ENCODE measurements at regions of chr2 and their contacts with region 1.

Region 1: DNA sequence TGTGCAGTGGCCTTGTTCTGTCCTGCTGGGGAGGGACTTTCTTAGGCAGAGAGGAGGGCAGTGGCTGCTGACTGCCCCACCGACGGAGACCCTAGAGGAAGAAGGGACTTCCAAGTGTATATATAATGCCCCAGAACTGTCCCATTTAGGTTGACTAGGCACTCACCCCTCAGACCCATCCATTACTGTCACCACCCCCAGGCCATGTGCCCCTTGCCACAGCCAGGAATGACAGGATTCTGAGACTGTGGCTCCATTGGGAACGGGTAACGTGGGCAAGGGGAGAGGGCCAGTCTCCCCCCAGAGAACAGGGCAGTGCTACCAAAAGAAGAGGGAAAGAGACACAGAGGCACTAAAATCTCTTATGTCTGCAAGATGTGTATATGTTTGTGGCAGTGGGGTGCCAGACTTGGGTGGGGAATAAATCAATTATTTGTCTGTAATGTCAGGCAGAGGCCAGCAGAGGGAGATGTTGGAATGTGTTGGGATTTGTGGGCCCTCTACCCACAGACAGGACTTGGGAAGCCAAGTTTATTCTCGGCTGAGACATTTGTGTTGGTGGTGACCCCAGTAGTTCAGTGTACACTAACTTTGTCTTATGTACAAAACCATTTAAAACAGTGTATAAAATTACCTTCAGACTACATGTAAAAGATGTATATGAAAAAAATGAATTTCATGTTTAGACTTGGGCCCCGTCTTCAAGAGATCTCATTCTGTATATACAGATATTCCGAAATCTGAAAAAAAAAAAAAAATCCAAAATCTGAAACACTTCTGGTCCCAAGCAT is 24.0 kb upstream of the TMEM37 start:
- DNase-seq: peak in 6 of 9 donors; percentile 5 to 50 (median 30)
- ATAC-seq: peak; percentile 57
- H3K4me3 ChIP-seq: no peak overlapping the region
- H3K4me3 Mint-ChIP-seq: no peak overlapping the region
- H3K27ac ChIP-seq: no peak overlapping the region
- H3K27ac Mint-ChIP-seq: no peak overlapping the region
- H3K4me1 ChIP-seq: no peaks in the 10 kb centered on the region
- H3K4me1 Mint-ChIP-seq: no peaks in the 10 kb centered on the region
- H3K27me3 ChIP-seq: no peaks in the 10 kb centered on the region
- H3K27me3 Mint-ChIP-seq: peaks cover 7 to 16% (median 10%) of the 10 kb centered on the region in 5 donors

Region 2: GRCh38 chr2:119476301-119477021 is 68.8 kb after region 1 on chr2:
- CTCF ChIA-PET with region 1: no interaction called
- POLR2A ChIA-PET with region 1: no interaction called
- intact Hi-C with region 1: loop called (anchors 1 kb)
- DNase-seq: peak in 6 of 9 donors; percentile 14 to 52 (median 26)
- ATAC-seq: peak; percentile 61
- H3K4me3 ChIP-seq: no peak overlapping the region
- H3K4me3 Mint-ChIP-seq: no peak overlapping the region
- H3K27ac ChIP-seq: no peak overlapping the region
- H3K27ac Mint-ChIP-seq: no peak overlapping the region
- H3K4me1 ChIP-seq: no peaks in the 10 kb centered on the region
- H3K4me1 Mint-ChIP-seq: peaks cover 0 to 2% (median 0%) of the 10 kb centered on the region in 7 donors
- H3K27me3 ChIP-seq: no peaks in the 10 kb centered on the region
- H3K27me3 Mint-ChIP-seq: peaks cover 0 to 28% (median 9%) of the 10 kb centered on the region in 5 donors

Region 3: GRCh38 chr2:119659601-119660342 is 252.1 kb after region 1 on chr2:
- CTCF ChIA-PET with region 1: no interaction called
- POLR2A ChIA-PET with region 1: no interaction called
- intact Hi-C with region 1: loop called in 1 of 2 experiments (anchors 2 kb)
- DNase-seq: peak in 4 of 9 donors; percentile 16 to 35 (median 27)
- ATAC-seq: peak; percentile 54
- H3K4me3 ChIP-seq: no peak overlapping the region
- H3K4me3 Mint-ChIP-seq: no peak overlapping the region
- H3K27ac ChIP-seq: no peak overlapping the region
- H3K27ac Mint-ChIP-seq: peak overlapping the region in 1 of 9 donors; percentile 23
- H3K4me1 ChIP-seq: peaks cover 0 to 3% of the 10 kb centered on the region in 2 donors
- H3K4me1 Mint-ChIP-seq: peaks cover 0 to 21% (median 5%) of the 10 kb centered on the region in 7 donors
- H3K27me3 ChIP-seq: no peaks in the 10 kb centered on the region
- H3K27me3 Mint-ChIP-seq: peaks cover 4 to 14% (median 8%) of the 10 kb centered on the region in 5 donors

Measured in naive thymus-derived CD4-positive, alpha-beta T cell (primary cell).